ENCODE measurements at regions of chr15 and their contacts with region 1.

Region 1: GRCh38 chr15:82966671-82967071 is 14.2 kb upstream of the HOMER2 start:
- DNase-seq: no peak
- H3K4me3 ChIP-seq: no peak overlapping the region
- H3K27ac ChIP-seq: no peak overlapping the region
- H3K4me1 ChIP-seq: peaks cover 0 to 11% (median 4%) of the 10 kb centered on the region in 4 experiments; a peak in 4 of 7 replicates
- H3K27me3 ChIP-seq: no peaks in the 10 kb centered on the region
- CTCF ChIP-seq: no peak
- EP300 ChIP-seq: no peak
- POLR2A ChIP-seq: no peak
- RAD21 ChIP-seq: no peak

Region 2: GRCh38 chr15:82985688-82986441 is 19.2 kb after region 1 on chr15 and contains the start of gene RAMAC:
- CTCF ChIA-PET with region 1: no interaction called
- POLR2A ChIA-PET with region 1: interaction called, 11 read pairs
- DNase-seq: peak; percentile 57 to 86
- H3K4me3 ChIP-seq: peak within 1 kb of the TSS; percentile 88 to 96 (median 94)
- H3K27ac ChIP-seq: peak within 1 kb of the TSS; percentile 48; the same call in 1 of the 2 replicates
- H3K4me1 ChIP-seq: peaks cover 0 to 3% (median 3%) of the 10 kb centered on the region in 4 experiments; a peak in 3 of 7 replicates
- H3K27me3 ChIP-seq: peaks cover 0 to 6% (median 5%) of the 10 kb centered on the region in 4 experiments; a peak in 6 of 7 replicates
- CTCF ChIP-seq: no peak
- EP300 ChIP-seq: no peak
- POLR2A ChIP-seq: peak; percentile 11 to 72
- RAD21 ChIP-seq: no peak
- total RNA-seq, gene RAMAC: 32.9 and 33.5 TPM in 2 replicates

Measured in H1 (cell line).